Cardiac septum (tissue), 1 donor: ENCODE measurements at regions of chr3 and their contacts with region 1.

Region 1: GRCh38 chr3:12484198-12484974 is at the start of gene TSEN2:
- DNase-seq: peak; percentile 97
- total RNA-seq, gene TSEN2: 11.1 TPM

Region 2: DNA sequence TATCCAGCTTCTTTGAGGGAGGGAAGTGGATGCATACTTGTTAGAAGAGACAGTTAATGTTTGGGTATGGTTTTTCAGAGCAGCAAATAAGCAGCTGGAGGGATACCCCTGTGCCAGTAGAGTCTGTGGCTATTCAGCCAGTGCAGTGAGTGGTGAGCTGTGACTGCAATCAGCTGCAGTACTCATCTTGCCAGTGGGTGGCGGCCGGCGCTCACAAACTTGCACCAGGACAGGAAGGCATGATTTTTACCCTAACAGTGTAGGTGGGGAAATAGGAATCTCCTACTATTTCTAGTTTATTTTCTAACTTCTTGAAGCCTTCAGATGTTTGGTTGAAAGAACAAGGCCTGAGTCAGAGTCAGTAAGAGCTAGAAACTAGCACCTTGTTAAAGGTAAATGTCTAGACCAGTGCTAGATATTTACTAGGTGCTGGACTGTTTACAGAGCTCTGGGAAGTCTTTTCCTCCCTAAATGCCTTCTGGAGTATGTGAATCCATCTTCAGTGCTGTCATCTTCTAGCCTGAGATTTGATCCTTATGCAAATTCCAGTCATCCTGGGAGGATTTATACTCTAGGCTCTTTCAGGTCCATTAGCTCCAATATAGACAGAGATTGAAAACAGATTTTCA is 349.2 kb before region 1 on chr3:
- intact Hi-C with region 1: loop called (anchors 2 kb)
- DNase-seq: peak; percentile 88

Region 3: GRCh38 chr3:12175844-12176453 is 308.4 kb before region 1 on chr3:
- intact Hi-C with region 1: loop called (anchors 5 kb)
- DNase-seq: peak; percentile 84

Region 4: GRCh38 chr3:12287727-12288191 is 196.6 kb before region 1 on chr3:
- intact Hi-C with region 1: loop called (anchors 5 kb)
- DNase-seq: no peak

Region 5: GRCh38 chr3:12495749-12496452 is 11.5 kb after region 1 on chr3:
- intact Hi-C with region 1: no loop called
- DNase-seq: no peak

Region 6: GRCh38 chr3:12556671-12557472 is 72.5 kb after region 1 on chr3 and contains the start of gene MKRN2:
- intact Hi-C with region 1: loop called (anchors 5 kb)
- DNase-seq: peak; percentile 94
- total RNA-seq, gene MKRN2: 27.9 TPM

Region 7: GRCh38 chr3:12663936-12664908 is 179.8 kb after region 1 on chr3 and contains the start of gene RAF1:
- intact Hi-C with region 1: loop called (anchors 5 kb)
- DNase-seq: peak; percentile 99
- total RNA-seq, gene RAF1: 118 TPM

Region 8: GRCh38 chr3:12719984-12720898 is 235.9 kb after region 1 on chr3:
- intact Hi-C with region 1: loop called (anchors 5 kb)
- DNase-seq: peak; percentile 85